MCF 10A (cell line): ENCODE measurements at regions of chr14 and their contacts with region 1.

Region 1: DNA sequence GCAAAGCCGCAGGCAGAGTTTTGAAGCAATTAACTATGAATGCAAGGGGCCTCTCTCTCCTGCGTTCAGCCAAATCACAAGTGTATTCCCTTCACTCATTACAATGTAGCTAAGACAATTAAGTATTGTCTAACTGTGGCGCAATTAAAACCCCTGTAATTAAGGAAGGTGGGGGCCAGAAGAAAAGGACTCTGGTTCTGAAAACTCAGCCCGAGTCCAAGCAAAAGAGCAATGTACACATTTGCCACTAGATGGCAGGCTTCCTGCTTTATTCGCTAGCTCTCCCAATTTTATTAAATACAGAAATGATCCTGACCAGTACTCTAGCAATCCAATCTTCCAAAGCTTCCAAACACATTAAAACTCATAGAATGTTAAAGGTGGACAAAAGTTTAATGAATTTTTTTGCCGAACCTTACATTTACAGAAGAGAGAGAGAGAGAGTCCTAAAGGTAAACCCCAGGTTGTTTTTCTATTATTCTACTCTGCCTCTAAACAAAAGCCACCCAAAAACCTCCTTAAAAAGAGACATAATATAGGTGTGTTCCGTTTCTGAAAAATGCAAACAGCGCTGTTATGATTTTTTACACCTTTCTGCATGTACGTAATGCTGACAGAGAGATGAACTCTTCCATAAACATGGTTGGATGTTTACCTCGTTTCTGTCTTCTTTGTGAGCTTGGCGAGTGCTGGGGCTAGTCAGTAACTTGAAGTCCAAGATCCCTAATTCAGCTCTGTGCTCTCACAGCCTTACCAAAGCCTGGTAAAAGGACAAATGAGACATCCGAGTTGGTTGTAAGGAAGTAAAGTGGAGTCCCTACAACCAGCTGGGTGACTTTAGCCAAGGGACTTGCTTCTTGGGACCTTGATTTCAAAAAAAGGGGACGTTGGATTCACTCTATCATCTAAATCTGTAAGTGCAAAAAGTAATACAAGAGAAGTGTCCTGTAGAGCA is 50.9 kb upstream of the VASH1 start:
- DNase-seq: peak; percentile 67
- H3K4me3 Mint-ChIP-seq: no peak overlapping the region
- H3K27ac Mint-ChIP-seq: no peak overlapping the region
- H3K4me1 Mint-ChIP-seq: no peaks in the 10 kb centered on the region
- H3K27me3 Mint-ChIP-seq: peaks cover 25% of the 10 kb centered on the region
- CTCF ChIP-seq: peak; percentile 41

Region 2: GRCh38 chr14:76697246-76697905 is 13.0 kb before region 1 on chr14:
- CTCF ChIA-PET with region 1: interaction called, 20 read pairs
- POLR2A ChIA-PET with region 1: no interaction called
- intact Hi-C with region 1: no loop called
- DNase-seq: no peak
- H3K4me3 Mint-ChIP-seq: no peak overlapping the region
- H3K27ac Mint-ChIP-seq: no peak overlapping the region
- H3K4me1 Mint-ChIP-seq: no peaks in the 10 kb centered on the region
- H3K27me3 Mint-ChIP-seq: no peaks in the 10 kb centered on the region
- CTCF ChIP-seq: no peak

Region 3: GRCh38 chr14:76729953-76730505 is 19.7 kb after region 1 on chr14:
- CTCF ChIA-PET with region 1: interaction called, 52 read pairs
- POLR2A ChIA-PET with region 1: no interaction called
- intact Hi-C with region 1: no loop called
- DNase-seq: no peak
- H3K4me3 Mint-ChIP-seq: no peak overlapping the region
- H3K27ac Mint-ChIP-seq: no peak overlapping the region
- H3K4me1 Mint-ChIP-seq: no peaks in the 10 kb centered on the region
- H3K27me3 Mint-ChIP-seq: peaks cover 64% of the 10 kb centered on the region
- CTCF ChIP-seq: no peak

Region 4: GRCh38 chr14:76806446-76806845 is 96.1 kb after region 1 on chr14:
- CTCF ChIA-PET with region 1: interaction called, 68 read pairs
- POLR2A ChIA-PET with region 1: interaction called, 10 read pairs
- intact Hi-C with region 1: loop called (anchors 1 kb)
- DNase-seq: no peak
- H3K4me3 Mint-ChIP-seq: no peak overlapping the region
- H3K27ac Mint-ChIP-seq: no peak overlapping the region
- H3K4me1 Mint-ChIP-seq: peaks cover 11% of the 10 kb centered on the region
- H3K27me3 Mint-ChIP-seq: no peaks in the 10 kb centered on the region
- CTCF ChIP-seq: no peak

Region 5: DNA sequence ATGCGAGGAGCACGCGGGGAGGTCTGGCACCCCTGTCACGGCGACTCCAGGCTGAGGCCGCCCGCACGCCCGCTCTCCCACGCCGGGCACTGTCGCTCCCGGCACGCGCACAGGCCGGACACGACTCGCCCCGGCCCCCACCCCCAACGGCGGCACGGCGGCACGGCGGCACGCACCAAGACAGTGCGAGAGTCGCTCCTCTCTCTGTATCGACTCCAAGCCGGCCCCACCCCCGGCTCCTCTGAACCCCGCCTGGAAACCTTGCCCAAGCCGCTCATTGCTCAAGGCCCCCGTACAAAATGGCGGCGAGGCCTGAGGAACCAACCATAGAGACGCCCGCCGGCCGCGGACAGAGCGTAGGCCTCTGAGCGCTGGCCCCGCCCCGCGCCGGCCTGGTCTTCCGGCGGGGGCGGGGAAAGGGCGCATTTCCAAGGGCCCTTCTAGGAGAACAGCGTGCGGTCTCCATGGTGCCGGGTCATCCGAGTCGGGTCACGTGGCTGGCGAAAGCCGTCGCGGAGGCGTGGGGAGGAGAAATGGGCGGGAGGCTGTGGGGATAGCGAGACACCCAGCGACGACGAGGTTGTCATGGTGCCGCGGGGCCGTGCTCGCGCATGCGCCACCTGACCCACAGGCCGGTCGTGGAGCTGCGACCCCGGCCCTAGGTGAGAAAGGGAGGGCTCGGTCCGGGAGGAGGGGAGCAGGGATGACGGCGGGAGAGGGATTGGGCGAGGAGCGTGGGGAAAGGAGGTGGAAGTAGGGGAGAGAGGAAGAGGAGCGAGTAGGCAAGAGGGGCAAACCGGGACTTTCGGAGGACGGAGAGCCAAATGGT is 387.6 kb after region 1 on chr14 and contains the start of gene CIPC:
- CTCF ChIA-PET with region 1: interaction called, 9 read pairs
- POLR2A ChIA-PET with region 1: no interaction called
- intact Hi-C with region 1: loop called (anchors 10 kb)
- DNase-seq: peak; percentile 99
- H3K4me3 Mint-ChIP-seq: peak within 1 kb of the TSS; percentile 98
- H3K27ac Mint-ChIP-seq: peak within 1 kb of the TSS; percentile 99
- H3K4me1 Mint-ChIP-seq: peaks cover 43% of the 10 kb centered on the region
- H3K27me3 Mint-ChIP-seq: no peaks in the 10 kb centered on the region
- CTCF ChIP-seq: no peak
- total RNA-seq, gene CIPC: 9.7 and 11.4 TPM in 2 replicates

Region 6: GRCh38 chr14:77133720-77134338 is 423.5 kb after region 1 on chr14:
- CTCF ChIA-PET with region 1: no interaction called
- POLR2A ChIA-PET with region 1: no interaction called
- intact Hi-C with region 1: no loop called
- DNase-seq: peak; percentile 72
- H3K4me3 Mint-ChIP-seq: no peak overlapping the region
- H3K27ac Mint-ChIP-seq: no peak overlapping the region
- H3K4me1 Mint-ChIP-seq: peaks cover 5% of the 10 kb centered on the region
- H3K27me3 Mint-ChIP-seq: peaks cover 64% of the 10 kb centered on the region
- CTCF ChIP-seq: no peak